ENCODE measurements at regions of chr14 and their contacts with region 1.

Region 1: GRCh38 chr14:75709207-75709812 is 48.3 kb downstream of the TTLL5 start:
- DNase-seq: peak; percentile 88
- ATAC-seq: peak; percentile 87
- H3K4me3 ChIP-seq: no peak overlapping the region
- H3K27ac ChIP-seq: no peak overlapping the region
- H3K4me1 ChIP-seq: peaks cover 8% of the 10 kb centered on the region; the same call in 1 of the 2 replicates
- H3K27me3 ChIP-seq: peaks cover 2% of the 10 kb centered on the region; the same call in 1 of the 2 replicates
- CTCF ChIP-seq: peak; percentile 84
- POLR2A ChIP-seq: no peak
- RAD21 ChIP-seq: peak; percentile 82

Region 2: GRCh38 chr14:75794615-75795038 is 85.3 kb after region 1 on chr14:
- CTCF ChIA-PET with region 1: interaction called, 3 read pairs
- POLR2A ChIA-PET with region 1: no interaction called
- dilution Hi-C with region 1: no loop called
- in situ Hi-C with region 1: no loop called
- intact Hi-C with region 1: loop called (anchors 2 kb)
- DNase-seq: peak; percentile 72
- ATAC-seq: peak; percentile 95
- H3K4me3 ChIP-seq: no peak overlapping the region
- H3K27ac ChIP-seq: no peak overlapping the region
- H3K4me1 ChIP-seq: no peaks in the 10 kb centered on the region
- H3K27me3 ChIP-seq: no peaks in the 10 kb centered on the region
- CTCF ChIP-seq: peak; percentile 65
- POLR2A ChIP-seq: no peak
- RAD21 ChIP-seq: peak; percentile 76

Region 3: GRCh38 chr14:75982266-75983018 is 273.1 kb after region 1 on chr14:
- CTCF ChIA-PET with region 1: interaction called, 63 read pairs
- POLR2A ChIA-PET with region 1: no interaction called
- dilution Hi-C with region 1: no loop called
- in situ Hi-C with region 1: loop called (anchors 5 kb)
- intact Hi-C with region 1: loop called (anchors 1 kb)
- DNase-seq: peak; percentile 77
- ATAC-seq: peak; percentile 72
- H3K4me3 ChIP-seq: peak overlapping the region; percentile 50
- H3K27ac ChIP-seq: peak overlapping the region; percentile 66
- H3K4me1 ChIP-seq: peaks cover 7% of the 10 kb centered on the region; the same call in 1 of the 2 replicates
- H3K27me3 ChIP-seq: no peaks in the 10 kb centered on the region; the same call in 1 of the 2 replicates
- CTCF ChIP-seq: peak; percentile 72
- POLR2A ChIP-seq: peak; percentile 7; the same call in 1 of the 2 replicates
- RAD21 ChIP-seq: peak; percentile 81

Region 4: GRCh38 chr14:76007852-76008251 is 298.5 kb after region 1 on chr14:
- CTCF ChIA-PET with region 1: no interaction called
- POLR2A ChIA-PET with region 1: no interaction called
- dilution Hi-C with region 1: no loop called
- in situ Hi-C with region 1: no loop called
- intact Hi-C with region 1: no loop called
- DNase-seq: peak; percentile 18
- ATAC-seq: 0 out of 2 replicates have a peak, but pooled peaks have one; percentile 16
- H3K4me3 ChIP-seq: no peak overlapping the region
- H3K27ac ChIP-seq: no peak overlapping the region
- H3K4me1 ChIP-seq: peaks cover 7% of the 10 kb centered on the region
- H3K27me3 ChIP-seq: no peaks in the 10 kb centered on the region
- CTCF ChIP-seq: no peak
- POLR2A ChIP-seq: no peak
- RAD21 ChIP-seq: no peak

Region 5: DNA sequence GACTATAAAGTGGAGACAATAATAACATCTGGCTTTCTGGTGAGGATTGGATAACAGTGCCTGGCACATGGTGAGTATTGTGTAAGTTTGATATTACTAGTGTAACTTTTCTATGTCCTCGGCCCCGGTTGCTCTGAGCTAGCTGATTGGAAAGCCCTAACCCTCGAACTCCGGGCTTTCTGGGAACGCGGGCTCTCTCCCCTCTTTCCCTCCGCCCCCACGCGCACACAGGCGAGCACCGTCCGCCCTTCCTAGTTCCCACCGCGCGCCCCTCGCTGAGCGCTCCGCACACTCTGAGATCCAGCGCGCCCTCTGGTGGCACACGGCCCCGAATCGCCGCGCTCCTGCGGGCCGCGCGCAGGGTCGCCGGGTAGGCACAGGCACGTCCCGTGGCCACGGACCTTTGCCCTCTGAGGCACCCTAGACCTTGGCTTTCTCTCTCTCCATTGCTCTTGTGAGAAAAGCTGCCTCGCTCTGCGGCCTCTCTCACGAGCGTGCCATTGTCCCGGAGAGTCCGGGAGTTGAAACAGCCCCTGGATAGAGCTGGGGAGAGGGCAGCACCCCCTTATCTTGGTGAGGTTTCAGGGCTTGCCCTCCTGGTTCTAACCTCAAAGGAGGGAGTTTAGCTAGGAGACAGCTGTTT is 643.5 kb after region 1 on chr14:
- CTCF ChIA-PET with region 1: interaction called, 3 read pairs
- POLR2A ChIA-PET with region 1: no interaction called
- dilution Hi-C with region 1: no loop called
- in situ Hi-C with region 1: loop called (anchors 25 kb)
- intact Hi-C with region 1: no loop called
- DNase-seq: peak; percentile 26
- ATAC-seq: peak; percentile 96
- H3K4me3 ChIP-seq: 0 out of 2 replicates have a peak overlapping the region, but pooled peaks have one; percentile 22
- H3K27ac ChIP-seq: no peak overlapping the region
- H3K4me1 ChIP-seq: no peaks in the 10 kb centered on the region
- H3K27me3 ChIP-seq: peaks cover 14% of the 10 kb centered on the region
- CTCF ChIP-seq: peak; percentile 68
- POLR2A ChIP-seq: no peak
- RAD21 ChIP-seq: peak; percentile 62

Region 6: DNA sequence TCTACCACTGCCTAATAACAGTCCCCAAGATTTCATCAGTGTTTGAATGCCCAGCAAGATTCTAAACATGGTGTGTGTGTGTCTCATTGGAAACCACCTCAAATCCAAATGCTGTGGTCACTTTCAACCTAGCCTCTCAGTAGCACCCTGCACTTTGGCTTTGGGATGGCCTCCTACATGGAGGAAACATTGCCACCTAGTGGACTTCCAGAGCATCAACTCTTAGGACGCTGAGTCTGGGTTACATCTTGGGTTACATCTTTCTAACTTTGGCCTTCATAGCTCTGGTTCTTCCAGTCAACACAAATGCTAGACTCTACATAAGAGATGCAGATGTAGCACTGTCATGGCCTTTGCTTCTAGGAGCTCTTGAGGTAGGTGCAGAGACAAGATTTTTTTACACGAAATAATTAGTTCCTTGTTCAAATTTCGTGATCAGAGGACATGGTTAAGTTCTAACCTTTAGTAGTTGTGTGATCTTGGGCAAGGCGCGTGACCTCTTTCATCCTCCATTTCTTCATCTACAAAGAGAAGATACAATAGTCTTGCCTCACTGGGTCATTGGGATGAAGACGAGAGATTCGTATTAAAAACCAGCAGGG is 938.5 kb after region 1 on chr14:
- CTCF ChIA-PET with region 1: no interaction called
- POLR2A ChIA-PET with region 1: no interaction called
- dilution Hi-C with region 1: no loop called
- in situ Hi-C with region 1: loop called (anchors 25 kb)
- intact Hi-C with region 1: loop called (anchors 5 kb)
- DNase-seq: peak; percentile 59
- ATAC-seq: peak; percentile 93
- H3K4me3 ChIP-seq: no peak overlapping the region
- H3K27ac ChIP-seq: no peak overlapping the region
- H3K4me1 ChIP-seq: no peaks in the 10 kb centered on the region
- H3K27me3 ChIP-seq: no peaks in the 10 kb centered on the region; the same call in 1 of the 2 replicates
- CTCF ChIP-seq: peak; percentile 61
- POLR2A ChIP-seq: no peak
- RAD21 ChIP-seq: peak; percentile 58

Measured in IMR-90 (cell line).